ENCODE measurements at regions of chr4 and their contacts with region 1.

Region 1: GRCh38 chr4:3047464-3048286 is 26.7 kb downstream of the HTT-AS start:
- DNase-seq: no peak
- H3K4me3 ChIP-seq: no peak overlapping the region
- CTCF ChIP-seq: peak; percentile 87

Region 2: DNA sequence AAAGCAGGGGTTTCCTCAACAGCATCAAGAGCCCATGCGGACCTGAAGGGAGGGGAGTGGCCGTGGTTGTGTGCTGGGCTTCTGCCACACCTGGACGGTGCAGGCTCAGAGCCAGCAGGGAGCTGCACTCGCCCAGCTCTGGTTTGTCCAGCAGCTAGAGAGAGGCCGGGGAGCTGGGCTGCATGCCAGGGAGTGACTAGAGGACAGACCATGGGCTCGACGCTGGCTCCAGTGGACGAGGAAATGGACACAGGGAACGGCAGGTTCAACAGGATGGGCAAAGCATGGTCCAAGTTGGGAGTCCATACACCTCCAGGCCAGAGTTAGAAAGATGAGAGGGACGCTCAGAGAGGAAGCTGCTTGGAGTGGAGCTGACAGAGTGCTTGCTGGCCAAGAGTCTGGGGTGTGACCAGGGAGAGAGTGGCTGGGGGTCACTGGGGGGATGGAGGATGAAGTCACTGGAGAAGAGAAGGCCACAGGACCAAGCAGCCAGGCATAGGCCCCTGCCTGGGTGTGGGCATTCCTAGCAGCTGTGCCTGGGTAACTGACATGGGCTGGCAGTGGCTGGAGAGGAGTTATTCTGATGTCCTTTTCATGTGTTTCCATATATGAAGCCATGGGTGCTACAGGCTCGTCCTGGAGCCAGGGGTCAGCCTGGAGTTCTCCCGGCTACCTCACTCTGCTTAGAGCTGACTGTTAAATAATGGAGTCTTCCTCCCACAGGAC is 16.2 kb before region 1 on chr4:
- CTCF ChIA-PET with region 1: interaction called, 31 read pairs
- POLR2A ChIA-PET with region 1: no interaction called
- DNase-seq: no peak
- H3K4me3 ChIP-seq: no peak overlapping the region
- CTCF ChIP-seq: no peak